GM12878 (cell line): ENCODE measurements at regions of chr12 and their contacts with region 1.

Region 1: GRCh38 chr12:122721057-122721545 is 4.5 kb upstream of the HCAR3 start:
- DNase-seq: peak; percentile 67
- ATAC-seq: peak; percentile 38
- H3K4me3 ChIP-seq: no peak overlapping the region
- H3K27ac ChIP-seq: peak overlapping the region; percentile 80
- H3K4me1 ChIP-seq: peaks cover 56% of the 10 kb centered on the region
- H3K27me3 ChIP-seq: no peaks in the 10 kb centered on the region
- CTCF ChIP-seq: no peak
- EP300 ChIP-seq: peak; percentile 55; a peak in 2 of 4 replicates
- POLR2A ChIP-seq: no peak
- RAD21 ChIP-seq: no peak

Region 2: DNA sequence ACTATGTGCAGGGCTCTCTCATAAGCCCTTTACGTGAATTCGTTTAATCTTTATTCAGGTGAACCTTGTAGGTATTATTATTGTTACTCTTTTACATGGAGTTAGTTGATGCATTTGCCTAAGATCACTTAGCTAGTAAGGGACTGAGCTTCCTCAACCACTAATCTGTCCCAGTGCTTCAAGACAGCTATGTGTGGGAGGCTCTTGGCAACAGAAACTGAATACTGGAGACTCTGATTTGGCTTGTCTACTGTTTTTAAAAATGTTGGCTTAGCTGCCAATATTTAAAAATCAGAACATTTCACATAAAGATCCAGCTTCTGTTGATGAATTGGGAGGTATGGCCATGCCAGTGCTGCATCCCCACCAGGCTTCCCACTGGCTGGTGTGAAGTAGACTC is 187.2 kb before region 1 on chr12:
- CTCF ChIA-PET with region 1: no interaction called
- POLR2A ChIA-PET with region 1: no interaction called
- RAD21 ChIA-PET with region 1: no interaction called
- SMC1A ChIA-PET with region 1: no interaction called
- in situ Hi-C with region 1: no loop called
- intact Hi-C with region 1: no loop called
- DNase-seq: no peak
- ATAC-seq: no peak
- H3K4me3 ChIP-seq: no peak overlapping the region
- H3K27ac ChIP-seq: no peak overlapping the region
- H3K4me1 ChIP-seq: peaks cover 16% of the 10 kb centered on the region
- H3K27me3 ChIP-seq: no peaks in the 10 kb centered on the region
- CTCF ChIP-seq: no peak
- EP300 ChIP-seq: no peak
- POLR2A ChIP-seq: no peak
- RAD21 ChIP-seq: no peak

Region 3: DNA sequence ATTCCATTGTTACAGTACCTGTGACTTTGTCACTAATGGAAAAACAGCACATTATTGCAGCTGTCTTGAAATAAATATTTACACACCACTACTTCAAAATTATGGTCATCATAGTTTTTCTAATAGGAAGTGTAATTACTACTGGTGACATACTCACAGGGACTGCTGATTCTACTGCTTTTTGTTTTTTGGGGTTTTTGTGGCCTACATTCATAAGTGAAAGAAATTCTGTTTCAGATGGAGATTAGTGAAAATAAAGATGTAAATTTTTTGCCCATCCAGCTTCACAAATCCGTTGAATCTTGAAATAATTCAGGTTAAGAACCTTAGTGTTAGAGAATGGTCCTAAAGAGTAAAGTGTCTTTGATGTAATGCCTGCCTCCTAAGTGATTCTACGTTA is 176.6 kb before region 1 on chr12:
- CTCF ChIA-PET with region 1: no interaction called
- POLR2A ChIA-PET with region 1: no interaction called
- RAD21 ChIA-PET with region 1: no interaction called
- SMC1A ChIA-PET with region 1: no interaction called
- in situ Hi-C with region 1: no loop called
- intact Hi-C with region 1: no loop called
- DNase-seq: no peak
- ATAC-seq: peak; percentile 82
- H3K4me3 ChIP-seq: peak overlapping the region; percentile 27; the same call in 1 of the 2 replicates
- H3K27ac ChIP-seq: peak overlapping the region; percentile 76
- H3K4me1 ChIP-seq: peaks cover 18% of the 10 kb centered on the region
- H3K27me3 ChIP-seq: no peaks in the 10 kb centered on the region
- CTCF ChIP-seq: no peak
- EP300 ChIP-seq: no peak
- POLR2A ChIP-seq: no peak
- RAD21 ChIP-seq: no peak

Region 4: DNA sequence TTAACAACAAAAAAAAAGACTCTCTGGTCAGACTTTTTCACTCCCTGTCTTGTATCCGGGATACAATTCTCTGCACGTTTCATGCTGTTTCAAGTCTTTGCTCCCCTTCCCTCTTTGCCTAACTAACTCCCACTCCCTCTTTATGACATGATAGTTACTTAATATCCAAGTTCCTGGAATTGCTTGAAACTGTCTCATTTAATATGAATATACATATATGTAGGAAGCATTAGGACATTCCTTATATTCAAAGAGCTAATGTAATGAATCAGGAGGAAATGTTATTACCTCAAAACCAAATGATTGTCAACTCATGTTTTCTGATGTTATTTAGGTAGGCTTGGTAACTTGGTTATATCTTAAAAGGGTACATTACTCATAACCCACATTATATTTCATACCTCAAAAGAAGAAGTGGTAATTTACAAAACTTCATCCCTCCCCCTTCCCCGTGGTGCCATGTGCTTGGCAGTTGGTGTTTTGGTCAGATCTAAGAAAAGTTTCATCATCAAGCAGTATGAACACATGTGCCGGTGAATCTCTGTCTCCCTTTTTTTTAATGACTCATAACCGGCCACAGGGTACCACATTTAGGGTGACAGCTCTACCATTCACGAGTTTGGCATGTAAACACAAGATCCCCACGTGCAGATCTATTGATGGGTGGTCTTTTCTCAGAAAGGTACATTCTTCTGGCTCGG is 74.4 kb before region 1 on chr12:
- CTCF ChIA-PET with region 1: no interaction called
- POLR2A ChIA-PET with region 1: interaction called, 3 read pairs
- RAD21 ChIA-PET with region 1: interaction called, 5 read pairs
- SMC1A ChIA-PET with region 1: interaction called, 5 read pairs
- in situ Hi-C with region 1: no loop called
- intact Hi-C with region 1: loop called (anchors 1 kb)
- DNase-seq: peak; percentile 90
- ATAC-seq: peak; percentile 97
- H3K4me3 ChIP-seq: peak overlapping the region; percentile 59; the same call in 1 of the 2 replicates
- H3K27ac ChIP-seq: peak overlapping the region; percentile 52; the same call in 1 of the 2 replicates
- H3K4me1 ChIP-seq: peaks cover 8% of the 10 kb centered on the region
- H3K27me3 ChIP-seq: no peaks in the 10 kb centered on the region
- CTCF ChIP-seq: no peak
- EP300 ChIP-seq: peak; percentile 62 to 98; a peak in 3 of 4 replicates
- POLR2A ChIP-seq: no peak
- RAD21 ChIP-seq: 0 out of 2 replicates have a peak, but pooled peaks have one; percentile 12

Region 5: DNA sequence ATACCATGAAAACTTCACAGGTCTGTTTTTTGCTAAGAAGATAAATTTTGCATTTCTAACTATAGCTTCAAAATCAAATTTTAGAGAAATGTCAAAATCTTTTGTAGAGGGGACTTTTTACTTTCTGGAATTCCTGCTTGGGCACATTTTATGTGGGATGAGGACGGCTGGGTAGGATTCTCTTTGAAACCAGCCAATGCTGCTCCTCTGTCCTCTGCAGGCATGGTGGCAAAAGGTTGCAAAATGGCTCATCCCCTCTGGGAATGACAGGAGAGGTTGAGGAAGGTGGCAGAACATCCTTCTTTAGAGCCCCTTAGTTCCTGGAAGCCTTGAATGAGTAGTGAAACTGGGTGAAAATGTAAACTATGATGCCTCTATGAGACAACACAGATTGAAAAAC is 46.6 kb after region 1 on chr12:
- CTCF ChIA-PET with region 1: no interaction called
- POLR2A ChIA-PET with region 1: no interaction called
- RAD21 ChIA-PET with region 1: no interaction called
- SMC1A ChIA-PET with region 1: no interaction called
- in situ Hi-C with region 1: no loop called
- intact Hi-C with region 1: no loop called
- DNase-seq: no peak
- ATAC-seq: no peak
- H3K4me3 ChIP-seq: no peak overlapping the region
- H3K27ac ChIP-seq: no peak overlapping the region
- H3K4me1 ChIP-seq: no peaks in the 10 kb centered on the region
- H3K27me3 ChIP-seq: no peaks in the 10 kb centered on the region
- CTCF ChIP-seq: no peak
- EP300 ChIP-seq: no peak
- POLR2A ChIP-seq: no peak
- RAD21 ChIP-seq: no peak